Transverse colon (tissue), 4 donors: ENCODE measurements at regions of chr17 and their contacts with region 1.

Region 1: GRCh38 chr17:20121359-20122253 is 112.4 kb downstream of the SPECC1 start:
- DNase-seq: peak; percentile 68
- H3K4me3 ChIP-seq: no peak overlapping the region
- H3K27ac ChIP-seq: no peak overlapping the region
- H3K4me1 ChIP-seq: peaks cover 0 to 10% (median 7%) of the 10 kb centered on the region in 4 donors
- H3K27me3 ChIP-seq: no peaks in the 10 kb centered on the region
- CTCF ChIP-seq: peak; percentile 84 to 87 (median 84)
- EP300 ChIP-seq: no peak
- POLR2A ChIP-seq: no peak

Region 2: GRCh38 chr17:19992803-19993713 is 128.5 kb before region 1 on chr17:
- in situ Hi-C with region 1: loop called in 2 of 4 experiments (anchors 10 kb)
- intact Hi-C with region 1: loop called (anchors 2 kb)
- DNase-seq: peak; percentile 86
- H3K4me3 ChIP-seq: no peak overlapping the region
- H3K27ac ChIP-seq: no peak overlapping the region
- H3K4me1 ChIP-seq: peaks cover 0 to 11% (median 3%) of the 10 kb centered on the region in 4 donors
- H3K27me3 ChIP-seq: no peaks in the 10 kb centered on the region
- CTCF ChIP-seq: peak; percentile 68 to 82 (median 73)
- EP300 ChIP-seq: no peak
- POLR2A ChIP-seq: no peak

Region 3: DNA sequence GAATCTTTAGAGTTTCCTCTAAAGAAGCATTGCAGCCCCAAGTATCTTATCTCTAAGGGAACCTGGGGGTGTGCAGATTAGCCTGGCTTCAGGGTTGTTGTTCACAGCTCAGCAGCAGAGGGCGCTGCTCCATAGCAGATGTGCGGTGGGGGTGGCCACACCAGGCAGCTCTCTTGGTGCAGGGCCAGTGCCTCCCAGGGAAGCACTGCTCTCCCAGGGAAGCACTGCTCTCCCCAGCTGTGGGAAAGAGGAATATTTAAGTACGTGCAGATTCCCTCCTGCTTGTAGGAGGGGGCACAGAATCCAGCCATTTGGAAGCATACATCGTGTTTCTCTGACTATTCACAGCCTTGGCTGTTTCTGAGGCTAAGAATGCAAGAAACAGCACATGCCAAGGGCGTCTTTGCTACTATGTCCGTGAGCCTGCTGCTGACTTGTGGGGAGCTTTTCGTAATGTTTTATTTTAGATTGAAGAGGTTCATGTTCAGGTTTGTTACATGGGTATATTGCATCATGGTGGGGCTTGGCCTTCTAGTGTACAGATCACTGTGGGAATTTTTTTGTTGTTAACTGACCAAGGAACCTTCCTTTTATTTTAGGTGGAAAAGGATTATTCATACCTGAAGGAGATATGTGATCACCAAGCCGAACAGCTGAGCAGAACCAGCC is 105.3 kb after region 1 on chr17:
- in situ Hi-C with region 1: loop called in 1 of 4 experiments (anchors 10 kb)
- intact Hi-C with region 1: loop called (anchors 2 kb)
- DNase-seq: peak; percentile 81
- H3K4me3 ChIP-seq: no peak overlapping the region
- H3K27ac ChIP-seq: no peak overlapping the region
- H3K4me1 ChIP-seq: peaks cover 0 to 4% (median 4%) of the 10 kb centered on the region in 4 donors
- H3K27me3 ChIP-seq: no peaks in the 10 kb centered on the region
- CTCF ChIP-seq: peak; percentile 72 to 88 (median 76)
- EP300 ChIP-seq: no peak
- POLR2A ChIP-seq: no peak

Region 4: GRCh38 chr17:20300436-20300934 is 178.9 kb after region 1 on chr17:
- in situ Hi-C with region 1: loop called in 1 of 4 experiments (anchors 25 kb)
- intact Hi-C with region 1: no loop called
- DNase-seq: no peak
- H3K4me3 ChIP-seq: no peak overlapping the region
- H3K27ac ChIP-seq: peak overlapping the region; percentile 30 to 78 (median 77)
- H3K4me1 ChIP-seq: peaks cover 0 to 10% (median 0%) of the 10 kb centered on the region in 4 donors
- H3K27me3 ChIP-seq: no peaks in the 10 kb centered on the region
- CTCF ChIP-seq: no peak
- EP300 ChIP-seq: no peak
- POLR2A ChIP-seq: no peak